A549 (cell line): ENCODE measurements at regions of chr2 and their contacts with region 1.

Region 1: GRCh38 chr2:54624591-54625071 is 98.8 kb upstream of the EML6 start:
- DNase-seq: no peak
- ATAC-seq: no peak
- H3K4me3 ChIP-seq: no peak overlapping the region
- H3K27ac ChIP-seq: no peak overlapping the region
- H3K4me1 ChIP-seq: peaks cover 6% of the 10 kb centered on the region
- CTCF ChIP-seq: no peak
- EP300 ChIP-seq: no peak
- POLR2A ChIP-seq: no peak
- RAD21 ChIP-seq: no peak

Region 2: GRCh38 chr2:54613794-54614257 is 10.8 kb before region 1 on chr2:
- CTCF ChIA-PET with region 1: interaction called, 16 read pairs
- POLR2A ChIA-PET with region 1: no interaction called
- DNase-seq: peak; percentile 22 to 83
- ATAC-seq: peak; percentile 77 to 83
- H3K4me3 ChIP-seq: peak overlapping the region; percentile 2; the same call in 1 of the 3 replicates
- H3K27ac ChIP-seq: peak overlapping the region; percentile 80 to 86
- H3K4me1 ChIP-seq: peaks cover 75% of the 10 kb centered on the region
- CTCF ChIP-seq: no peak
- EP300 ChIP-seq: peak; percentile 38 to 42; a peak in 2 of 5 replicates
- POLR2A ChIP-seq: no peak
- RAD21 ChIP-seq: peak in 1 of 2 experiments; percentile 31; a peak in 2 of 5 replicates

Region 3: GRCh38 chr2:54723131-54723995 is 98.7 kb after region 1 on chr2 and contains the start of gene EML6:
- CTCF ChIA-PET with region 1: no interaction called
- POLR2A ChIA-PET with region 1: no interaction called
- DNase-seq: peak; percentile 97 to 99
- ATAC-seq: peak; percentile 95 to 99
- H3K4me3 ChIP-seq: peak within 1 kb of the TSS; percentile 49
- H3K27ac ChIP-seq: peak within 1 kb of the TSS; percentile 62 to 85
- H3K4me1 ChIP-seq: peaks cover 9% of the 10 kb centered on the region
- CTCF ChIP-seq: peak; percentile 27; the same call in 2 of the 3 replicates
- EP300 ChIP-seq: no peak
- POLR2A ChIP-seq: peak; percentile 92
- RAD21 ChIP-seq: peak in 1 of 2 experiments; percentile 14; a peak in 1 of 5 replicates
- polyA plus RNA-seq, gene EML6: 1.5 and 3.0 TPM in 2 replicates